MCF 10A (cell line): ENCODE measurements at regions of chr1 and their contacts with region 1.

Region 1: GRCh38 chr1:81915937-81916336 is 115.2 kb downstream of the ADGRL2 start:
- DNase-seq: no peak
- H3K4me3 Mint-ChIP-seq: no peak overlapping the region
- H3K27ac Mint-ChIP-seq: no peak overlapping the region
- H3K4me1 Mint-ChIP-seq: no peaks in the 10 kb centered on the region
- H3K27me3 Mint-ChIP-seq: no peaks in the 10 kb centered on the region
- CTCF ChIP-seq: no peak

Region 2: GRCh38 chr1:83531521-83532309 is 1615.8 kb after region 1 on chr1:
- CTCF ChIA-PET with region 1: no interaction called
- POLR2A ChIA-PET with region 1: no interaction called
- intact Hi-C with region 1: loop called (anchors 5 kb)
- DNase-seq: no peak
- H3K4me3 Mint-ChIP-seq: no peak overlapping the region
- H3K27ac Mint-ChIP-seq: no peak overlapping the region
- H3K4me1 Mint-ChIP-seq: no peaks in the 10 kb centered on the region
- H3K27me3 Mint-ChIP-seq: no peaks in the 10 kb centered on the region
- CTCF ChIP-seq: no peak